HCT116 (cell line): ENCODE measurements at regions of chr2 and their contacts with region 1.

Region 1: GRCh38 chr2:189096769-189097447 is 82.7 kb downstream of the COL5A2 start:
- DNase-seq: peak; percentile 21
- ATAC-seq: peak; percentile 79
- H3K4me3 ChIP-seq: no peak overlapping the region
- H3K27ac ChIP-seq: no peak overlapping the region
- H3K4me1 ChIP-seq: peaks cover 9 to 14% of the 10 kb centered on the region in 2 experiments; a peak in 3 of 4 replicates
- H3K27me3 ChIP-seq: no peaks in the 10 kb centered on the region
- CTCF ChIP-seq: no peak
- POLR2A ChIP-seq: no peak
- RAD21 ChIP-seq: no peak

Region 2: GRCh38 chr2:189022053-189022481 is 74.8 kb before region 1 on chr2:
- CTCF ChIA-PET with region 1: no interaction called
- POLR2A ChIA-PET with region 1: no interaction called
- RAD21 ChIA-PET with region 1: no interaction called
- intact Hi-C with region 1: no loop called
- DNase-seq: no peak
- ATAC-seq: no peak
- H3K4me3 ChIP-seq: no peak overlapping the region
- H3K27ac ChIP-seq: no peak overlapping the region
- H3K4me1 ChIP-seq: no peaks in the 10 kb centered on the region
- H3K27me3 ChIP-seq: no peaks in the 10 kb centered on the region
- CTCF ChIP-seq: no peak
- POLR2A ChIP-seq: no peak
- RAD21 ChIP-seq: no peak

Region 3: DNA sequence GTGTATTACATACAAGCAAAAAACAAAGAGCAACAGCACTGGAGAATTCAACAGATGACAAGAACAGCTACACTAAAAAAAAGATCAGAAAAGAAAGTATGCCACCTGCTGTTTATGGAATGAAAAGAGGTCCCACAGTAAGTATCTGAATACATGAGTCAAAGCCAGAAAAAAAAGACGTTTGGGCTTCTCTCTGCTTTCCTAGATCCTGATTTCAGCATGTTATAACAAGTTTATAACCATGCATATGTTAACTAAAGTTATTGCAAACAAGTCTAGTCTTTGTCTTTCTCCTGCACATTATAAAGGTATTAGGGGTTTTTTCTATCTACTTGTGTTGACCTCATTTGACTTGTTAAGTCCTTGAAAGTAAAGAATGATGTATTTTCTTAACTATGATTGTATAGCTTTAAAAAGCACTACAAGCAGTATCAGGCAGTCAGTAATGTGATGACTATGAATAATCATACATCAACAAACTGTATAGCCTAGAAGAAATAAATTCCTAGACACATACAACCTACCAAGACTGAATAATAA is 191.1 kb after region 1 on chr2:
- CTCF ChIA-PET with region 1: interaction called, 4 read pairs
- POLR2A ChIA-PET with region 1: no interaction called
- RAD21 ChIA-PET with region 1: no interaction called
- intact Hi-C with region 1: loop called (anchors 1 kb)
- DNase-seq: peak; percentile 34
- ATAC-seq: peak; percentile 76
- H3K4me3 ChIP-seq: no peak overlapping the region
- H3K27ac ChIP-seq: no peak overlapping the region
- H3K4me1 ChIP-seq: no peaks in the 10 kb centered on the region
- H3K27me3 ChIP-seq: no peaks in the 10 kb centered on the region
- CTCF ChIP-seq: peak; percentile 38 to 89 (median 57); a peak in 5 of 6 replicates
- POLR2A ChIP-seq: no peak
- RAD21 ChIP-seq: peak; percentile 82

Region 4: DNA sequence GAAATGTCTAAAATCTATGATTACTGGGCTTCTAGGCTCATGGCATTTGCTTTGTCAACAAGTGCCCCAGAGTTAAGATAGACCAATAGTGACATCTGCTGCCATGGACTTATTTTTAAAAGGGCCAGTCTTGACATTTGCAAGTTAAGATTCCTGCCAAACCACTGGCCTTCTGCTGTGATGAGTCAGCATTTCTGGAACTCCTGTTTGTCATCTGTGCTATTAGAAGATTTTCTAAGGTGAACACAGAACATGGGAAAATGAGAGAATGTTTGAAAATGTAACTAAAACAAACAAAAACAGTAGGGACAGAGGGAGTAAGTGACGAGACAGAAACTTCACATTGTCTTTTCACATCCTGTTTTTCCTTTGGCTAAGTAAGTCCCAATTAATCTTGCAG is 250.6 kb after region 1 on chr2:
- CTCF ChIA-PET with region 1: no interaction called
- POLR2A ChIA-PET with region 1: no interaction called
- RAD21 ChIA-PET with region 1: no interaction called
- intact Hi-C with region 1: loop called (anchors 2 kb)
- DNase-seq: peak; percentile 53
- ATAC-seq: peak; percentile 70
- H3K4me3 ChIP-seq: no peak overlapping the region
- H3K27ac ChIP-seq: no peak overlapping the region
- H3K4me1 ChIP-seq: peaks cover 3 to 14% of the 10 kb centered on the region in 2 experiments; a peak in 2 of 4 replicates
- H3K27me3 ChIP-seq: no peaks in the 10 kb centered on the region
- CTCF ChIP-seq: peak in 2 of 3 experiments; percentile 28 to 52; a peak in 2 of 6 replicates
- POLR2A ChIP-seq: no peak
- RAD21 ChIP-seq: peak; percentile 80